ENCODE measurements at regions of chr1 and their contacts with region 1.

Region 1: GRCh38 chr1:205061665-205062069 is 18.7 kb downstream of the CNTN2 start:
- H3K4me3 ChIP-seq: no peak overlapping the region
- H3K27ac ChIP-seq: no peak overlapping the region
- H3K4me1 ChIP-seq: no peaks in the 10 kb centered on the region
- CTCF ChIP-seq: peak; percentile 82

Region 2: DNA sequence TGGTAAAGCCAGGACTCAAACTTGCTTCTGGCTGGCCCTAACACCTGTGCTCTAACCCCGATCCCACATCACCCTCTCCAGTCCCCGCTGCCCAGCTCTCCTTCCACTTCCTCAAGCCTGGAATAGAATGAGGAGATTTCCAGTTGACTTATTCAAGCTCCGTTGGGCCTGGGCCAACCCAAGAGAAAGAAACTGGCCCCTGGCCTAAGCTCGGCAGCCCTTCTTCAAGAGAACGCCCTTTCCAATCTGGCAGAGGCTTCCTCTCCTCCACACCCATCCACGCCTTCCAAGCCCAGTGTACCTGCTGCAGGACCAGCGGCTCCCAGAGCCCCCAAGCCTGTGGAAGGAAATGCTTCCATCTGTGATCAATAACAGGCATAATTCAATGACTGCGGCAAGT is 428.0 kb before region 1 on chr1:
- CTCF ChIA-PET with region 1: no interaction called
- POLR2A ChIA-PET with region 1: no interaction called
- H3K4me3 ChIP-seq: no peak overlapping the region
- H3K27ac ChIP-seq: no peak overlapping the region
- H3K4me1 ChIP-seq: no peaks in the 10 kb centered on the region
- CTCF ChIP-seq: no peak

Region 3: DNA sequence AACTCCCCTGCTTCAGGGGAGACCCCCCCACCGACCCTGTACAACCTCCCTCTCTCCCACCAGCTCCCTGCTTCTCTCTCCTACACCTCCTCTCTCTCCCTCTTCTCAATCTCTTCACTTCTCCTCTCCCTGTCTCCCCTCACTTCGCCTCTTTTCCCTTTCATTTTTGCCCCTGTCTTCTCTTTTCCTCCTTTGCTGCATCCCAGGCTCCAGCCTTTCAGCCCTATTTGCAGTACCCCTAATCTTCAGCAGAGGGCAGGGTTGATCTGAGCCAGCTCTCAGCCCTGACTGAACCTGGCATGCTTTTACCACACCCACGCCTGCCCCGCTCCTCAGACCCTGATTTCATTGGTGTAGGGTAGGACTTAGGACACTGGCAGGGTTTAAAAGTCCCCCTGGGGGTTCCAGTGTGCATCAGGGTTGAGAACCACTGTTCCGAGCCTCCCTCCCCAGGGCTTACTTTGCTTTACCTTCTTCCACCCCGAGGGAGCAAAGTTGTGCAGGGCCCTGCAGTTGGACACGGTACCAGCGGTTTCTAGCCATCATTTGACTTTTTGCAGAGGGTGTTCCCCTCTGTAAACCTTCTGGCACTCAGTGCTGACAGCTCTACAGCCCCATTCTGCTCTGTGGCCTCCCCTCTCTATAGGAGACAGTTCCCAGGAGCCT is 86.0 kb before region 1 on chr1:
- CTCF ChIA-PET with region 1: interaction called, 63 read pairs
- POLR2A ChIA-PET with region 1: no interaction called
- H3K4me3 ChIP-seq: no peak overlapping the region
- H3K27ac ChIP-seq: no peak overlapping the region
- H3K4me1 ChIP-seq: no peaks in the 10 kb centered on the region
- CTCF ChIP-seq: peak; percentile 84

Region 4: DNA sequence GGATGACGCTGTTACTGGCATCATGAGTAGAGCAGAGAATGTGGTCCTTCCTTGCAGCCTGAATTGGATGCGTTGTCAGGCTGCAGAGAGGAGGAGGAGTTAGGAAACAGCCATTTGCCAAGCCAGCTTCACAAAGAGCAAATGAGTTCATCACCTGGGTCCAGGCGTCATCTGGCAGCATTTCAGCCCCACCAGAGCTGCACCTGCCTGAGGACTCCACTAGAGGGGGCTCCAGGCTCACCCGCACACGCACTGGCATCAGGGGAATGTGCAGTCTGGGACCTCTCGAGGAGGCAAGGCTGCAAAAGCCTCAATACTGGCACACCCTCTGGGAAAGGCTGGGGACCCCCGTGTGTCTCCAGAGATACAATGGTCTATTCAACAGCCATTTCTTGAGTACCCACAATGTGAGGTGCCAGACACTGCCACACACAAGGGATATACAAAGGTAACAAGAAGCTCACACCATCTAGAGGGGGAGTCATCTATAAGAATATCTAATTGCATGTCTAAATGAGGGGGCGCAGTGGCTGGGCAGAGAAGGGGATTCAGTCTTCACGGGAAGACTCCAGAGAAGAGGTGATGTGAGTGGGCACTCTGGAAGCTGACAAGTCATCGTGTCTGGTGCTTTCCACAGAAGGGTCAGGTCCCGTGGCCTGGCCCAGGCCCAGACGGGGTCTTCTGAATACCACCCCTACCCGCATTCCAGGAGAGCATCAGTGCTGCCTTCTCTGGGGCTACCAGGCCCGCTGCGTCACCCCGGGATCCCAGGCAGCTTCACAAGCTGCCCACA is 72.2 kb before region 1 on chr1:
- CTCF ChIA-PET with region 1: interaction called, 282 read pairs
- POLR2A ChIA-PET with region 1: interaction called, 5 read pairs
- H3K4me3 ChIP-seq: no peak overlapping the region
- H3K27ac ChIP-seq: no peak overlapping the region
- H3K4me1 ChIP-seq: no peaks in the 10 kb centered on the region
- CTCF ChIP-seq: peak; percentile 88

Region 5: GRCh38 chr1:205028924-205029323 is 32.7 kb before region 1 on chr1:
- CTCF ChIA-PET with region 1: interaction called, 10 read pairs
- POLR2A ChIA-PET with region 1: no interaction called
- H3K4me3 ChIP-seq: no peak overlapping the region
- H3K27ac ChIP-seq: no peak overlapping the region
- H3K4me1 ChIP-seq: no peaks in the 10 kb centered on the region
- CTCF ChIP-seq: no peak

Region 6: DNA sequence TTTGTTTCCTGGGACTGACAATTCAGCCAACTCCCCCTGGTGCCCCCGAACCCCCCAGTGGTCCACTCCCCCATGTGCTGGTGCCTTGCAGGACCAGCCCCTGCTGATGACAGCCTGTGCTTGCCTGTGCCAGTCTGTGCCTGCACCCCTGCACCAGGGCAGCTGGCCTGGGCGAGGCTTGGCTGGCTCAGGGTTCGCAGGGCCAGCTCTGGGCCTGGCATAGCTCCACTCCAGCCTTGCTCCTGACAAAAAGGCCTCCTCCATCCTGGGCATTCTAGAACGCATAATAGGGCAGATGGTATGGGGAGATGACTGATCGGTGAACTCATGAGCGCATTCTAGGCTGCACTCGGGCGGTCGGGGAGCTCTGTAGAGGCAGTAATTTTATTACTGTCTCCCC is 13.3 kb before region 1 on chr1:
- CTCF ChIA-PET with region 1: interaction called, 34 read pairs
- POLR2A ChIA-PET with region 1: no interaction called
- H3K4me3 ChIP-seq: no peak overlapping the region
- H3K27ac ChIP-seq: no peak overlapping the region
- H3K4me1 ChIP-seq: no peaks in the 10 kb centered on the region
- CTCF ChIP-seq: no peak

Region 7: DNA sequence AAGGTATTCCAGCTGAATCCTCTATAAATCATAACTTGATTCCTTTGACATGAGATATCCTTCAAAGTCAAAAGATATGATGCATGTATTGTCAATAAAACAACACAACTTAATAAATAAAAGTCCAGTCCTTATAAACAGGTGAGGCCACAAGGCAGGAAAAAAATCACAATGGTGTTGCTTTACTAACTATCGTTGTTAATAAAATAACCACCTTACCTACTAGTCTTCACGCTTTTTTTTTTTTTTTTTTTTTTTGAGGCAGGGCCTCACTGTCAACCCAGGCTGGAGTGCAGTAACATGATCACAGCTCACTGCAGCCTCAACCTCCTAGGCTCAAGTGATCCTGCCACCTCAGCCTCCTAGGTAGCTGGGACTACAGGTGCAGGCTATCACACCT is 22.7 kb after region 1 on chr1 and contains the start of gene TMEM81:
- CTCF ChIA-PET with region 1: interaction called, 13 read pairs
- POLR2A ChIA-PET with region 1: no interaction called
- H3K4me3 ChIP-seq: no peak within 1 kb of the TSS
- H3K27ac ChIP-seq: no peak within 1 kb of the TSS
- H3K4me1 ChIP-seq: no peaks in the 10 kb centered on the region
- CTCF ChIP-seq: no peak

Region 8: GRCh38 chr1:205141236-205142101 is 79.8 kb after region 1 on chr1:
- CTCF ChIA-PET with region 1: interaction called, 14 read pairs
- POLR2A ChIA-PET with region 1: no interaction called
- H3K4me3 ChIP-seq: no peak overlapping the region
- H3K27ac ChIP-seq: no peak overlapping the region
- H3K4me1 ChIP-seq: no peaks in the 10 kb centered on the region
- CTCF ChIP-seq: peak; percentile 67

Measured in HEK293 (cell line).